ENCODE measurements at regions of chr2 and their contacts with region 1.

Region 1: DNA sequence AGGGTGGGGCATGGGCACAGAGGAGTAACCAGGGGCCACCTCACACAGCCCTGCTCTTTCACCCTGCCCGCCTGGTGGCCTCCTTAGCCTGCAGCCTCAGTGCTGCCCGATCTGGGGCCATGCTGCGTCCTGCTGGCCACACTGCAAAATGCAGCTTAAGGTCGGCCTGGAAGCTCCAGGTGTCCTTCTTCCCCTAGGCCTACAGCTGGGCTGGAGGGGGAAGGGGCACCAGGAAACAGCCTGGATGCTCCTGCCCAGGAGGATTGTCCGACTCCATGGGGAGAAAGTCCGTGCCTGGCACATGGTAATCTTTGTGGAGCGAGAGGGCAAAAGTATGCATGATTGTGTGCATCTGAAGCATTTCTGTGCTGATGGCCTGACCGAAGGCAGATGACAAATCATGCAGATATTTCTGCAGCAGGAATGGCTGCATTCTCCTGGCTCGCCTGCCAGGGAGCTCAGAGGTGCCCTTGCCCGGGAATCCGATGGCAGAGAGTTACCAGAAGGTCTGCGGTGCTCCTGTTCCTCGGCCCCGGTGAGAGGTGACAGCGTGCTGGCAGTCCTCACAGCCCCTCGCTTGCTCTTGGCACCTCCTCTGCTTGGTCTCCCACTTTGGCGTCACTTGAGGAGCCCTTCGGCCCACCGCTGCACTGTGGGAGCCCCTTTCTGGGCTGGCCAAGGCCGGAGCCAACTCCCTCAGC is 12.8 kb upstream of the ALPP start:
- DNase-seq: no peak
- H3K4me3 ChIP-seq: no peak overlapping the region
- H3K27ac ChIP-seq: no peak overlapping the region
- H3K4me1 ChIP-seq: peaks cover 0 to 24% (median 6%) of the 10 kb centered on the region in 4 experiments; a peak in 6 of 7 replicates
- H3K27me3 ChIP-seq: no peaks in the 10 kb centered on the region
- CTCF ChIP-seq: peak; percentile 72 to 81 (median 73)
- EP300 ChIP-seq: no peak
- POLR2A ChIP-seq: no peak
- RAD21 ChIP-seq: peak; percentile 51 to 66

Region 2: DNA sequence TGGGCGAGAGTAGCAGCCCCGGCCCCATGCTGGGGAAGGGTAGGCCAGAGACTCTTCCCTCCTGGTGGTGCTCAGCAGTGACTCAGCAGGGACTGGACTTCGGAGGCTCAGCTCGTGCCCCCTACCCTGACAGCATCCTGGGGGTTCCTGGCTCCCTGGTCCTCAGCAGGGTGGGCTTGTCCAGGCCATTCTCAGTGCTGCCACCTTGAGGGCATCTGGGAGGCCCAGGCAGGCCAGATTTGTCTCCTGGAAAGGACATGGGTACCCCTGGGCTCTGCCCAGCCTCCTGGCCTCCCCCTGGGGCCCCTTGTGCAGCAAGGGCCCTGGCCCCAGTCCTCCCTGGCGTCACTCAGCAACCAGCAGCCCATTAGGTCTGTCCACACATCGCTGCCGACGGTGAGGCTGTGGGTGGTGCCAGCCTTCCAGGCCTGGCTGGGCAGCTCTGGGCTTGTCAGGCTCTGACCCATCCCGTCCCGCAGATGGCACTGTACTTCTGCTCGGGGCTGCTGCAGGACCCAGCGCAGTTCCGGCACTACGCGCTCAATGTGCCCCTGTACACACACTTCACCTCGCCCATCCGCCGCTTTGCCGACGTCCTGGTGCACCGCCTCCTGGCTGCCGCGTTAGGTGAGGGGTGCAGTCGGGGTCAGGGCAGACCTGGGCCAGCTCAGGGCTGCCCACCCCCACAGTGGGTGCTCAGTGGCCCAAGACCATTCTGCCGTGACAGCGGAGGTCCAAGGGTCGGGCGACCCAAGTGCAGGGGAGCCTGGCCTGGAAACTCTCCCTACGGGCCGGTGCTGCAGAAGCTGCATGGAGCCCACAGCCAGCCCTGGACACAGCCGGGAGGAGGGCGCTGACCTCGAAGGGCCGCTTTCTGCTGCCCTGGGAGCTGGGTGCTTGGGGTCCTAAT is 32.2 kb before region 1 on chr2:
- CTCF ChIA-PET with region 1: interaction called, 92 read pairs
- POLR2A ChIA-PET with region 1: interaction called, 3 read pairs
- DNase-seq: peak in 1 of 2 experiments; percentile 76
- H3K4me3 ChIP-seq: no peak overlapping the region
- H3K27ac ChIP-seq: no peak overlapping the region
- H3K4me1 ChIP-seq: peaks cover 0 to 9% (median 6%) of the 10 kb centered on the region in 4 experiments; a peak in 4 of 7 replicates
- H3K27me3 ChIP-seq: no peaks in the 10 kb centered on the region
- CTCF ChIP-seq: peak in 2 of 3 experiments; percentile 65 to 69; a peak in 3 of 4 replicates
- EP300 ChIP-seq: no peak
- POLR2A ChIP-seq: no peak
- RAD21 ChIP-seq: no peak; a peak in 1 of 4 replicates

Region 3: DNA sequence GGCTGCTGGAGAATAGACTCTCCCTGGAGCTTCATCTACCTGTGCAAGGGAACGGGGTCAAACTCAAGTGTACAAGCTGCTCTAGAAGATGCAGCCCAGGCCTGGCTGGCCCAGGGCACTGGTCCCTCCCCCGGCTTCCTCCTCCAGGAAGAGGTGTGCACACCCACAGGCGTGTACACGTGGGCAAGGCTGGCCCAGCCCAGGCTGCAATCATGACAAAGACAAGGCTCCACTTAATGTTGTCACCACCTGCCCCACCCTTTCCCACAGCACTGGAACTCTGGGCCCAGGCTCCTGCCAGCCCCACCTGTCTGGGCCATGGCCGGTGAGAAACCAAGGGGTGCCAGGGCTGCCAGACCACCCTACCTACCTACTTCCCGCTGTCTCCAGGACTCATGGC is 16.8 kb before region 1 on chr2:
- CTCF ChIA-PET with region 1: interaction called, 100 read pairs
- POLR2A ChIA-PET with region 1: interaction called, 3 read pairs
- DNase-seq: peak in 1 of 2 experiments; percentile 33
- H3K4me3 ChIP-seq: no peak overlapping the region
- H3K27ac ChIP-seq: no peak overlapping the region
- H3K4me1 ChIP-seq: peaks cover 0 to 4% (median 2%) of the 10 kb centered on the region in 4 experiments; a peak in 3 of 7 replicates
- H3K27me3 ChIP-seq: peaks cover 25 to 47% (median 33%) of the 10 kb centered on the region in 4 experiments; a peak in 6 of 7 replicates
- CTCF ChIP-seq: no peak
- EP300 ChIP-seq: no peak
- POLR2A ChIP-seq: no peak
- RAD21 ChIP-seq: no peak

Region 4: GRCh38 chr2:232400256-232401015 is 34.7 kb after region 1 on chr2:
- CTCF ChIA-PET with region 1: interaction called, 17 read pairs
- POLR2A ChIA-PET with region 1: no interaction called
- DNase-seq: no peak
- H3K4me3 ChIP-seq: no peak overlapping the region
- H3K27ac ChIP-seq: no peak overlapping the region
- H3K4me1 ChIP-seq: no peaks in the 10 kb centered on the region
- H3K27me3 ChIP-seq: no peaks in the 10 kb centered on the region
- CTCF ChIP-seq: no peak
- EP300 ChIP-seq: no peak
- POLR2A ChIP-seq: no peak
- RAD21 ChIP-seq: no peak

Region 5: GRCh38 chr2:232432598-232433184 is 66.9 kb after region 1 on chr2:
- CTCF ChIA-PET with region 1: interaction called, 82 read pairs
- POLR2A ChIA-PET with region 1: interaction called, 3 read pairs
- DNase-seq: peak in 1 of 2 experiments; percentile 87
- H3K4me3 ChIP-seq: no peak overlapping the region
- H3K27ac ChIP-seq: peak overlapping the region; percentile 27; the same call in 1 of the 2 replicates
- H3K4me1 ChIP-seq: peaks cover 0 to 9% (median 7%) of the 10 kb centered on the region in 4 experiments; a peak in 6 of 7 replicates
- H3K27me3 ChIP-seq: peaks cover 0 to 2% (median 0%) of the 10 kb centered on the region in 4 experiments; a peak in 1 of 7 replicates
- CTCF ChIP-seq: peak in 2 of 3 experiments; percentile 50 to 78; a peak in 2 of 4 replicates
- EP300 ChIP-seq: no peak
- POLR2A ChIP-seq: no peak
- RAD21 ChIP-seq: peak; percentile 24 to 42; a peak in 3 of 4 replicates